GM10248 (cell line): ENCODE measurements at regions of chr11 and their contacts with region 1.

Region 1: GRCh38 chr11:441418-442274 is at the start of gene ANO9:
- DNase-seq: peak; percentile 90
- CTCF ChIP-seq: no peak

Region 2: GRCh38 chr11:215581-216037 is 226.0 kb before region 1 on chr11:
- CTCF ChIA-PET with region 1: no interaction called
- POLR2A ChIA-PET with region 1: interaction called, 15 read pairs
- DNase-seq: no peak
- CTCF ChIP-seq: no peak